Activated CD8-positive, alpha-beta T cell treated with anti-CD3 and anti-CD28 coated beads for 36 hours (primary cell): ENCODE measurements at regions of chr3 and their contacts with region 1.

Region 1: GRCh38 chr3:17023006-17023664 is 138.4 kb downstream of the PLCL2 start:
- DNase-seq: peak; percentile 81
- ATAC-seq: peak; percentile 89
- H3K4me3 Mint-ChIP-seq: peak overlapping the region; percentile 71
- H3K27ac Mint-ChIP-seq: peak overlapping the region; percentile 92
- H3K4me1 Mint-ChIP-seq: peaks cover 72% of the 10 kb centered on the region
- H3K27me3 Mint-ChIP-seq: no peaks in the 10 kb centered on the region
- CTCF ChIP-seq: no peak

Region 2: DNA sequence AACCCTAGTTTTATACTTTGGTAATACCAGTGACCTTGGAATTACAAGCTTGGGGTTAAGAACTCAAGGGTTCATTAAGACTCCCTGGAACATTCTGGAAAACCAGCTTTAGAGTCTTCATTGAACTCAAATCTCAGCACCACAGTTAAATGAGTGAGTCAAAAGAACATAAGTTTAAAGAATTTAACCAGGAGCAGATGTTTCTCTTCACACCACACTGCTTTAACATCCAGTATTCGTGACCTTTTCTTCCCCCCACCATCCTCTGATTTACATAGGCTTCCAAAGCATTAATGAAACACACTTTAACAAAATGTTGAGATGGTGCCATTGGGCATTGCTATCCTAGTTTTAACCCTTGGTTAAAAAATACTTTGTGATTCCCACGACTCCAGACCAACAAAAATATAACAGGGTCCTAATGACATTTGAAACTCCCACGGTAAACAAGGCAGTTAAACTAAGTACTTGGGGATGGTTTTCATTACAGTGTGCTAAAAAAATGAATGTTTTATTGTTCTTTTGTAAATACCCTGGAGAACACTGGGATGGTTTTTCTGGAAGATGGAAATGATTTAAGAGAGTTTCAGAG is 634.2 kb before region 1 on chr3:
- CTCF ChIA-PET with region 1: no interaction called
- POLR2A ChIA-PET with region 1: no interaction called
- intact Hi-C with region 1: no loop called
- DNase-seq: no peak
- ATAC-seq: no peak
- H3K4me3 Mint-ChIP-seq: no peak overlapping the region
- H3K27ac Mint-ChIP-seq: no peak overlapping the region
- H3K4me1 Mint-ChIP-seq: peaks cover 51% of the 10 kb centered on the region
- H3K27me3 Mint-ChIP-seq: no peaks in the 10 kb centered on the region
- CTCF ChIP-seq: no peak

Region 3: GRCh38 chr3:16906682-16907081 is 116.5 kb before region 1 on chr3:
- CTCF ChIA-PET with region 1: interaction called, 3 read pairs
- POLR2A ChIA-PET with region 1: interaction called, 5 read pairs
- intact Hi-C with region 1: loop called (anchors 5 kb)
- DNase-seq: peak; percentile 45
- ATAC-seq: no peak
- H3K4me3 Mint-ChIP-seq: peak overlapping the region; percentile 29
- H3K27ac Mint-ChIP-seq: peak overlapping the region; percentile 65
- H3K4me1 Mint-ChIP-seq: peaks cover 77% of the 10 kb centered on the region
- H3K27me3 Mint-ChIP-seq: no peaks in the 10 kb centered on the region
- CTCF ChIP-seq: no peak